ENCODE measurements at regions of chr3 and their contacts with region 1.

Region 1: GRCh38 chr3:149717391-149718056 is 34.8 kb downstream of the COMMD2 start:
- DNase-seq: no peak
- ATAC-seq: peak; percentile 87
- H3K4me3 ChIP-seq: no peak overlapping the region
- H3K27ac ChIP-seq: no peak overlapping the region
- H3K4me1 ChIP-seq: no peaks in the 10 kb centered on the region
- H3K27me3 ChIP-seq: no peaks in the 10 kb centered on the region
- CTCF ChIP-seq: peak; percentile 64 to 70 (median 66)
- EP300 ChIP-seq: no peak
- POLR2A ChIP-seq: no peak
- RAD21 ChIP-seq: peak; percentile 78

Region 2: GRCh38 chr3:149553781-149554451 is 163.6 kb before region 1 on chr3:
- CTCF ChIA-PET with region 1: interaction called, 16 read pairs
- POLR2A ChIA-PET with region 1: no interaction called
- RAD21 ChIA-PET with region 1: no interaction called
- SMC1A ChIA-PET with region 1: interaction called, 3 read pairs
- in situ Hi-C with region 1: no loop called
- intact Hi-C with region 1: no loop called
- DNase-seq: no peak
- ATAC-seq: no peak
- H3K4me3 ChIP-seq: no peak overlapping the region
- H3K27ac ChIP-seq: no peak overlapping the region
- H3K4me1 ChIP-seq: peaks cover 9% of the 10 kb centered on the region
- H3K27me3 ChIP-seq: no peaks in the 10 kb centered on the region
- CTCF ChIP-seq: no peak
- EP300 ChIP-seq: no peak
- POLR2A ChIP-seq: no peak
- RAD21 ChIP-seq: no peak

Region 3: DNA sequence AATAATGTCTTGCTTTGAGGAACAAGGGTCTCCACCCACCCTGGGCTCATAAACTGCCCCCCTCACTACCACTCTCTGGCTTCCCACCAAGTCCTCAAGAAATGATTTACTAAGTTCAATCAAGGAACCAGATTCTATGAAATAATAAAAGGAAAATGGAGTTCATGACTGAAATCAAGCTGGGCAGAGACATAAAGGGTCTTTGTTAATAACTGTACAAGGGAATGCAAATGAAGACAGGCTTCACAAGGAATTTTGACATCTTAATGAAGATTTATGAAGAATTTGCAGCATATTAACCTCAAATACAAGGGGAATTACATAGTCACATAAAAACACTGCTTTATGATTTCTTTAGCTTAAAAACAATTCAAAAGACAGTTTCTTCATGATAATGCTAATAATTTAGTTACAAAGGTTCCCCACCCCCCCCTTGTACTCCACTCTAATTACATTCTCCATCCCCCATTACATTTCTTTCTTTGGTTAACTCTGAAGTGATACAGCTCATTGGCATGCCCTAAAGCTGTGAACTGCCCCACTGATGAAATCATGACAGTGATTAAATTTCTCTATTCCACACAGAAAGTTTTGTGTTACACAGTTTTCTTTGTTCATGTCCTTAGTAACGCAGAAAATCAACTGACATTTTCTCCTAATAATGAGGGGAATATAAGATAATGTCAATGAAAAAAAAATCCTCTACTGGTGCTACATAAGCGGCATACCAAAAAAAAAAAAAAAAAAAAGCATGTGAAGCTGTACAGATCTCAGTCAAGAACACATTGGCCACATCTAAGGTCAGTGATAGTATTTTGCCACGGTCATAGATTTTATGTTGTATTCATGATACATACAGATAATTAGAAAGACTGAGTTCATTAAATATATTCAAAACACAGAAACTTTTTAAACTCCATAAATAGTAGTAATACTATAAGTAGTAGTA is 114.1 kb before region 1 on chr3:
- CTCF ChIA-PET with region 1: interaction called, 17 read pairs
- POLR2A ChIA-PET with region 1: no interaction called
- RAD21 ChIA-PET with region 1: interaction called, 3 read pairs
- SMC1A ChIA-PET with region 1: interaction called, 14 read pairs
- in situ Hi-C with region 1: no loop called
- intact Hi-C with region 1: no loop called
- DNase-seq: no peak
- ATAC-seq: no peak
- H3K4me3 ChIP-seq: no peak overlapping the region
- H3K27ac ChIP-seq: peak overlapping the region; percentile 12; the same call in 1 of the 2 replicates
- H3K4me1 ChIP-seq: peaks cover 28% of the 10 kb centered on the region
- H3K27me3 ChIP-seq: no peaks in the 10 kb centered on the region
- CTCF ChIP-seq: no peak
- EP300 ChIP-seq: peak; percentile 35 to 58; a peak in 1 of 4 replicates
- POLR2A ChIP-seq: no peak
- RAD21 ChIP-seq: no peak

Region 4: GRCh38 chr3:149670742-149671492 is 46.6 kb before region 1 on chr3:
- CTCF ChIA-PET with region 1: interaction called, 20 read pairs
- POLR2A ChIA-PET with region 1: no interaction called
- RAD21 ChIA-PET with region 1: interaction called, 11 read pairs
- SMC1A ChIA-PET with region 1: interaction called, 17 read pairs
- in situ Hi-C with region 1: no loop called
- intact Hi-C with region 1: no loop called
- DNase-seq: no peak
- ATAC-seq: peak; percentile 72
- H3K4me3 ChIP-seq: peak overlapping the region; percentile 4
- H3K27ac ChIP-seq: no peak overlapping the region
- H3K4me1 ChIP-seq: no peaks in the 10 kb centered on the region; the same call in 1 of the 2 replicates
- H3K27me3 ChIP-seq: no peaks in the 10 kb centered on the region
- CTCF ChIP-seq: no peak
- EP300 ChIP-seq: no peak
- POLR2A ChIP-seq: no peak
- RAD21 ChIP-seq: no peak

Region 5: DNA sequence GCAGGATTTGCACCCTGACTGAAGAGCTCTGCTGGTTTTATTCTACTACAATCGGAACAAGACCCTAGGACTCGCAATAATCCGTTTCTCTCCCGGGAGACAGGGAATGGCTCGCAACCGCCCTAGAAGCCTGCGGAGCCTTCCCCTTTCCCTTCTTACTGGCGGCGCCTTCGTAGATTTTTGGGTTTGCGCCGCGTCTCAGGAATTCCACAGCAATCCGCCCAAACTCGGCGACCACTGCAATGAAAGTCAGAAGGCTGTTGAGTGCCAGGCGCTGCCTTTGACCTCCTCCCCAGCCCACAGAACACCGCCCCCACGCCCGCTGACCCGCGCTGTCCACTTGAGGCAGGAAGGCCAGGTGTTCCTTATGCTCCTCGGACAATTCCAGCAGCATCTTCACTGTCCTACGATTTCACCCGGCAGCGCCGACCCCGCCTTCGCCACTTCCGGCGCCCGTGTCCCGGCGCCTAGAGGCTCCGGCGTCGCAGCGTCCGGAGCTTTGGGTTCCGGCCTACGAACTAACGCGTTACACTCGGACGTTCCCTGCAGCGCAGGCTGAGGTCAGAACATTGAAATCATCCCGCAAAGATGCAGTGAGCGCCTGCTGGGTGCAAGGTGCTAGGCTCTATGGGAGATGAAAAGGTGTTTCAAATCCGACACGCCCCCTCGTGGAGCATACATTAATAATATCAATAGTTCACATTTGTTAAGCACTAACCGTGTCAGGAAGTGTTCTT is 34.7 kb after region 1 on chr3 and contains the start of gene COMMD2:
- CTCF ChIA-PET with region 1: interaction called, 21 read pairs
- POLR2A ChIA-PET with region 1: interaction called, 4 read pairs
- RAD21 ChIA-PET with region 1: interaction called, 14 read pairs
- SMC1A ChIA-PET with region 1: interaction called, 4 read pairs
- in situ Hi-C with region 1: no loop called
- intact Hi-C with region 1: no loop called
- DNase-seq: peak; percentile 84
- ATAC-seq: peak; percentile 100
- H3K4me3 ChIP-seq: peak within 1 kb of the TSS; percentile 85
- H3K27ac ChIP-seq: peak within 1 kb of the TSS; percentile 54
- H3K4me1 ChIP-seq: no peaks in the 10 kb centered on the region
- H3K27me3 ChIP-seq: no peaks in the 10 kb centered on the region
- CTCF ChIP-seq: peak; percentile 21 to 47 (median 46); a peak in 5 of 6 replicates
- EP300 ChIP-seq: no peak
- POLR2A ChIP-seq: peak; percentile 95
- RAD21 ChIP-seq: peak; percentile 40
- polyA plus RNA-seq, gene COMMD2: 59.4 to 97.0 TPM

Region 6: GRCh38 chr3:149815321-149815720 is 97.8 kb after region 1 on chr3:
- CTCF ChIA-PET with region 1: no interaction called
- POLR2A ChIA-PET with region 1: no interaction called
- RAD21 ChIA-PET with region 1: no interaction called
- SMC1A ChIA-PET with region 1: no interaction called
- in situ Hi-C with region 1: no loop called
- intact Hi-C with region 1: no loop called
- DNase-seq: no peak
- ATAC-seq: no peak
- H3K4me3 ChIP-seq: peak overlapping the region; percentile 80; the same call in 1 of the 2 replicates
- H3K27ac ChIP-seq: no peak overlapping the region
- H3K4me1 ChIP-seq: no peaks in the 10 kb centered on the region
- H3K27me3 ChIP-seq: no peaks in the 10 kb centered on the region
- CTCF ChIP-seq: no peak
- EP300 ChIP-seq: no peak; a peak in 1 of 4 replicates
- POLR2A ChIP-seq: no peak
- RAD21 ChIP-seq: no peak